GM13977 (cell line): ENCODE measurements at regions of chr11 and their contacts with region 1.

Region 1: DNA sequence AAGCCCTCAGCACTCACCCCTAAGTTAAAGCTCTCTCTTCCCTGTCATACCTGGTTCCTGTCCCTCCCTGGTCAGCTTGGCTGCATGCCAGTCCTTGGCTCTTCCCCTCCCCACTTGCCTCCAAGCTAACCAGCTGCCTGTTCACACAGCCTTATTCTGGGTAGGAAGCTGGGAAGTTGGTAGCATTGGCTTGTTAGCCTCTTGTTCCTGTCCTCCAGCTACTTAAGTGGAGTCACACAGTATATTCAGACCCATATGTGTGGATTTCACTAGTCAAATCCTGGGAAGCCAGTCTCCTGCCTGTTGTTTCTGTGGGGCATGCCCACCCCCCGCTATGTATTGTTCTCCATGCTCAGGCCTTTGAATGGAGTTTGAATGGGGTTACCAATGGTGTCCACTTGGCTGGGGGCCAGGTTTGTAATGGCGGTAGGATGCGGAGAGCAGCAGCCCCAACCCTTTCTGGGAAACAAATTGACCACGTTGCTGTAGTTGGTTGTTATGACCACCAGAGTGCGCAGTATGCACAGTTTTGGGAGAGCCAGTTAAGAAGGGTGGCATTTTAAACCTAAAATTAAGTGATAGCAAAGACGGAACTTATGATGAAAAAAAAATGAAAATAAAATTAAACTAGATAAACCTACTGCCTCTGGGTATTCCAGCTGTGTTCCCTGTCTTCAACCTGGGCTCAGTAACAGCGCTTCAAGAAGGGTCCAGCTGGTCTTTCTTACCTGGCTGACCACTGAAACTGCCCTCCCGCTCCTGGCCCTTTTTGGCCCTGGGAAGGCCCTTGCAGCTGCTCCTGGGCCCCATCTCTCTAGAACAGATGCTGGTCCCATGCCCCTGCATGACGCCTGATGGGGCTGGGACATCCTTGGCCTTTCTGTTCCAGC is 10.7 kb upstream of the RPS3 start:
- DNase-seq: peak; percentile 78
- CTCF ChIP-seq: peak; percentile 77

Region 2: DNA sequence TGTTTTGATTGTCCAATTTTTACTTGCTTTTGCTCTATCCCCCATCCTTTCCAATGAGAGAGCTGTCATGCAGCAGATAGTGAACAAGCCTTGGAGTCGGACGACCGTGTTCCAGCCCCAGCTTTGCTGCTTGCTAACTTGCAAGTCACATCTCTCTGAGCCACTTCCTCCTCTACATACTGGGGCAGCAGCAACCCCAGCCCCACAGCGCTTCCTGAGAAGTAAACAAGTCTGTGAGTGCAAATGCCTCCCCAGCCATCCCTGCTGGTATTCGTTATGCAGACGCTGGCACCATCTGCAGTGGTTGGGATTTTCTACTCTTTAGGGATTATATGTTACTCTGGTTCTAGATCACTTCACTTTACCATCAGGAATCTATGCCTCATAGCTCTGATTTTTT is 113.0 kb before region 1 on chr11:
- in situ Hi-C with region 1: loop called (anchors 5 kb)
- DNase-seq: no peak
- CTCF ChIP-seq: no peak

Region 3: GRCh38 chr11:75490221-75491181 is 101.9 kb after region 1 on chr11:
- in situ Hi-C with region 1: no loop called
- DNase-seq: no peak
- CTCF ChIP-seq: no peak

Region 4: DNA sequence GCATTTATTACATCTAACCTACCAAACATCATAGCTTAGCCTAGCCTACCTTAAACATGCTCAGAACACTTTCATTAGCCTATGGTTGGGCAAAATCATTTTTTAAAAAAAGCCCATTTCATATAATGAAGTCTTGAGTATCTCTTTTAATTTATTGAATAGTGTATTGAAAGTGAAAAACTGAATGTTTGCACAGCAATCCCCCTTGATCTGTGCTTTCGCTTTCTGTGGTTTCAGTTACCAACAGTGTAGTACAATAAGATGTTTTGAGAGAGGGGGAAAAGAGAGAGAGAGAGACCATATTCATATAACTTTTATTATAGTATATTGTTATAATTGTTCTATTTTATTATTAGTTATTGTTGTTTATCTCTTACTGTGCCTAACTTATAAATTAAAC is 288.6 kb after region 1 on chr11:
- in situ Hi-C with region 1: no loop called
- DNase-seq: peak; percentile 44
- CTCF ChIP-seq: no peak